ENCODE measurements at regions of chr15 and their contacts with region 1.

Region 1: DNA sequence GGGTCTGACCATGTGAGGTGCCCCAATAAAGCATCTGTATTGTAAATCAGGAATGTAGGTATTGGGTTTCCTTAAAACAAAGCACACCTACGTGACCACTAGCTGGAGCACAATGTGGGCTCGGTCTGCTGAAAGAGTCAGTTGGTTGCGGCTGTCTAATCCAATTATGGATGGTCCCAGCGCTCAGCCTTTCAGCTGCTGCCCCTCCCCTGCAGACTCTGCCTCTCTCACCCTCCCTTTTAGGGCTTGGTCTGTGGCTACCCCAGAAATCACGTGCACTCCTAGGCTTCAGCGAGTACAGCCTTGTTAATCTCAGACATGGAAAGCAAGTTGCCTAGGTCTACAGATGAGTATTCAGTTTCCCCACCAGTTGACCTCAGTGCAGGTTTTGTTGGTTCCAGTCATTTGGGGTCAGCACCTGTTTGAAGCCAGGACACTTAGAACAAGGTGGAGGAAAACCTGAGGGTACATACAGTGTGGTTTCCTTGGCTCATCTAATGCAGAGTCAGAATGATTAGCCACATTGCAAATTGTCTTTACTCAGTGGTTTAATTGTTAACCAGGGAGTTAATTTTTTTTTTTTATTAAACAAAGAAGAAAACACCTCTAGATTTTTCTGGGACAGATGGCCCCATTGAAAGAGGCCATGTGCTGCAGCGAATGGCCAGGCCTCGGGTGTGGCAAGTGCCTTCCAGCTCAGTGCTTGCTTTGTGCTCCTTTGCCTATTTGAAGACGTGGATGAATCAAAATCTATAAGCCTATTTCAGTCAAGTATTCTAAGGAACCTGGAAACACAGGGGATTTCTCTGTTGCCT is 137.7 kb downstream of the IGF1R start:
- DNase-seq: no peak
- ATAC-seq: no peak
- H3K4me3 ChIP-seq: no peak overlapping the region
- H3K27ac ChIP-seq: no peak overlapping the region
- H3K4me1 ChIP-seq: peaks cover 5 to 13% of the 10 kb centered on the region in 2 donors
- H3K27me3 ChIP-seq: no peaks in the 10 kb centered on the region

Region 2: DNA sequence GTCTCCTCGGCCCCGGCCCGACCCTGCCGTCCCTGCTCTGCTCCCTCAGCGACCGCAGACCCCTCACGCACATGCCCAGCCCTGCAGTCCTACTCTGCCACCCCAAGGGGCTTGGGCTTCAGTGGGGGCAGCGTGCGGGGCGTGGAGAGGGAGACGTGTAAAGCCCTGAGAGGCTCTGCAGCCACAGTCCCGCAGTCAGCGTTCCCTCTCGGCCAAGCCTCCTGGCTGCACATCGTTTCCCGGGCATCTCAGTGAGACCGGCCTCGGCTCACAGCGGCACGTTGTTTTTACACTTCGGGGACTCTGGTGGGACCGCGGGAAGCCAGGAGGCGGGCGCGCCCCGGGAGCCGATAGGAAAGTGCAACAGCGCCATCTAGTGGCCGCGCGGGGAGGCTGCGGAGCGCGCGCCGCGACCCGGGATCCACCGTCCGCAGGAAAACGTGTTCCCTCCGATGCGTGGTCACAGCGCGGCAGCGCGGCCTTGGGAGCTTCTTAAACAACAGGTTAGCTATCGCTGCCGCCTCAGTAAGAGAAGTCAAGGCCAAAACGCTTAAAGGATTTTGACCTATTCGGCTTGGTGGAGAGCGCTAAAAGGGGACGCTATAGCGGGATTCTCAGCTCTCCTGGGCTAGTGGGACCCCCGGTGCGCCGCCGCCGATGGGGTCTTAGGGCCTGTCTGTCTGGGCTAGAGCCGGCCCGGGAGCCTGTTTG is 364.4 kb before region 1 on chr15:
- intact Hi-C with region 1: no loop called
- DNase-seq: peak; percentile 78 to 94
- ATAC-seq: peak; percentile 92
- H3K4me3 ChIP-seq: no peak overlapping the region
- H3K27ac ChIP-seq: no peak overlapping the region
- H3K4me1 ChIP-seq: no peaks in the 10 kb centered on the region
- H3K27me3 ChIP-seq: peaks cover 0 to 2% of the 10 kb centered on the region in 2 donors

Region 3: GRCh38 chr15:98703126-98703685 is 82.8 kb before region 1 on chr15:
- intact Hi-C with region 1: no loop called
- DNase-seq: no peak
- ATAC-seq: no peak
- H3K4me3 ChIP-seq: no peak overlapping the region
- H3K27ac ChIP-seq: no peak overlapping the region
- H3K4me1 ChIP-seq: peaks cover 0 to 2% of the 10 kb centered on the region in 2 donors
- H3K27me3 ChIP-seq: no peaks in the 10 kb centered on the region

Region 4: DNA sequence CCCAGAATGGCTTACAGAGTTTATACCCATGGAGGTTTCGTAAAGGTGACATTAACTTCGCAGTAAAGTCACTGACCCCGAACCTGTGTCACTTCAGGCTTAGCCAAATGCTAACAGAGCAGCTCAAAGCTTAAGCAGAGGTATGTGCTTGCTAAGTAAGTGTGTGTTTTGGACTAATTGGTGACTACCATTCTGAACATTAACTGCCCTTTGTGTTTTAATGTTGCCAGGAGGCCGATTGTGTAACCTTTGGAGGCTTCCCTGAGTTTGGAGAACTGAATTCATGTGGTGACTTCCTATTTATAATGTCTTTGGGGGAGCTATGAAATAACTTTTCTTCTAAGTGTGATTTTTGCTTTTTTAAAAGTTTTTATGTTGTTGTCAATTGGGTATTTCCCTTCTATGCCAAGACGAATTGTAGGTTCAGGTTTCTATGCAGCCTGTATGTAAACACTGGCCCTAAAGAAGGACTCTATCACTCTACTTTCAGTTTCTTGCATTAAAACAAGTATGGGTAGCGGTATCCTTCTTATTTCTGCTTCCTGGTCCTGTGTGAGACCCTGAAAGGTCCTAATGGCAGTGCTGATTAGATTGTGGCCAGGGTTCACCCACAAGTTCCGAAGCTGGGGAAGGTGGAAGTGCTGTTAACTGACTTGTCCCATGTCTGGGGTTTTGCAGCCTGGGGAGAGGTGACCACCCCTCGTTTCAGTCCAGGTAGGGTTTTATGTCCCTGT is 51.4 kb before region 1 on chr15:
- intact Hi-C with region 1: loop called in 1 of 2 experiments (anchors 5 kb)
- DNase-seq: no peak
- ATAC-seq: peak; percentile 37
- H3K4me3 ChIP-seq: no peak overlapping the region
- H3K27ac ChIP-seq: peak overlapping the region in 1 of 2 donors; percentile 68
- H3K4me1 ChIP-seq: peaks cover 7 to 20% of the 10 kb centered on the region in 2 donors
- H3K27me3 ChIP-seq: no peaks in the 10 kb centered on the region

Region 5: DNA sequence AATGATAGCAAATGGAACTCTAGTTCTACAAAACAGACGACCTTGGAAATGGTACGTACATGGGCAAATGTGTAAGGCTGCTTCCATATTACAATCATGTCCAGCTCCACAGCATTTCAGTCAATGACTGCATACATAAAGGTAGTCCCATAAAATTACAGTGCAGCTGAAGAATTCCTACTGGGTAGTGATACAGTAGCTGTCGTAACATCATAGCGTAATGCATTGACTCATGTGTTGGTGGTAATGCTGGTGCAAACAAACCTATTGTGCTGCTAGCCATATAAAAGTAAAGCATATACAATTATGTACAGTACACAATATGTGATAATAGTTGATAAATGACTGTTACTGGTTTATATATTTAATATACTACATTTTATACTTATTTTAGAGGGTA is 444.9 kb after region 1 on chr15:
- intact Hi-C with region 1: no loop called
- DNase-seq: no peak
- ATAC-seq: no peak
- H3K4me3 ChIP-seq: no peak overlapping the region
- H3K27ac ChIP-seq: no peak overlapping the region
- H3K4me1 ChIP-seq: no peaks in the 10 kb centered on the region
- H3K27me3 ChIP-seq: no peaks in the 10 kb centered on the region

Measured in aorta (tissue), 5 donors.